CD4-positive, alpha-beta memory T cell (primary cell): ENCODE measurements at regions of chr5 and their contacts with region 1.

Region 1: DNA sequence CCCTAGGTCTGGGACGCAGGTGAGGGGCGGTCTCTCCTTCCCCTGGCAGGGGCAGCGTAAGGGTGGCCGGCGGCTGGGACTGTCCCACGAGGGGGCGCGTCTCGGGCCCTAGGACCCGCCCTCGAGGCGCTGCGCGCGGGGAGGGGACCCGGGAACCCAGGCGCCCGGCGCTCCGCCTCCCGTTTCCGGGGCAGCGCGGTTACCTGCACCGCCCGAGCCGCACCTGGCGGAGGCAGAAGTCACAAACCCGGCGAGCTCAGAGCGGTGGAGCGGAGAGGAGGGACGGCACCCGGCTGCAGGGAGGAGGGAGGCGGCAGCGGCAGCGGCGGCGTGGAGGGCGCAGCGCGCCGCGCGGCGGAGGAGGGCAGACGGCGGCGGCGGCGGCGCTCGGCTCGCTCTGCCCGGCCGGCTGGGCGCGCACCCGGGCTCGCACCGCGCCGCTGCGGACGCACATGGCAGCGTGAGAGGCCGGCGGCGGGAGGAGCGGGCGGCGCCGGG is at the start of gene WWC1:
- DNase-seq: peak; percentile 62 to 83 (median 76)
- H3K4me3 ChIP-seq: no peak within 1 kb of the TSS
- H3K4me3 Mint-ChIP-seq: peak within 1 kb of the TSS; percentile 71 to 86 (median 82)
- H3K27ac ChIP-seq: no peak within 1 kb of the TSS
- H3K27ac Mint-ChIP-seq: peak within 1 kb of the TSS in 2 of 7 donors; percentile 17 to 35
- H3K4me1 ChIP-seq: peaks cover 15% of the 10 kb centered on the region
- H3K4me1 Mint-ChIP-seq: peaks cover 6 to 22% (median 16%) of the 10 kb centered on the region in 4 donors
- H3K27me3 ChIP-seq: peaks cover 14% of the 10 kb centered on the region
- H3K27me3 Mint-ChIP-seq: peaks cover 4 to 10% of the 10 kb centered on the region in 2 donors
- total RNA-seq, gene WWC1: 2.0 to 2.7 TPM

Region 2: DNA sequence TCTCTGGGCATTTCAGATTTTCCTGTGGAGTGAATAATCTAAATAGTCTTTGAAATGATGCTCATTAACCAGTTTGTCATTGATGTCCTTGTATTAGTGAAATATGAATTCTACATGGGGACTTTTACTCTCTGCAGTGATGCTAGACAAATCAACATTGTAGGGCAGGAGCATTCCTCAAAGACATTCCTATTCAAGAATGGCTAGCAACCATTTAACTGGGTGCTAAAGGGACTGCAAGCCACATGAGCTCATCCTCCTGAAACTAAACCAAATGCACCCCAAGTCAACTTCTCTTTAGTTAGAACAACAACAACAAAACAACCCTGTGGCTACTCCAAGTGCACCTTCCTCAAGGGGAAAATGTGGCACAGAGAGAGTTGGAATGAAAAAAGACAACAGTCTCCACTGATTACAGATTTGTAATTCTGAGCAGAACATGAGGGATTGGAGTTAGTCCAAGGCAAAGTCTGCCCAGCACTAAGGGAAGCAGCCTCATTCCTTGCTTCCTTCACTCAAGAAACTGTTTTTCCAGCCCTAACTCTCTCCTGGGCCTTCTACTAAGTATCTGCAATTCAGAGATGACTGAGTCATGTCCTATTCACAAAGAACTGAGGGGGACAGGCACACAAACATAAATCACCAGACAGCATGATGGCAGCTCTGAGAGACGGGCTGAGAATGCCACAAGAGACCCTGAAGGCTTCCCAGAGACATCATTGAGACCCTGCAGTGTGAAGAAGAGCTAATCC is 82.1 kb before region 1 on chr5:
- CTCF ChIA-PET with region 1: no interaction called
- POLR2A ChIA-PET with region 1: no interaction called
- intact Hi-C with region 1: no loop called
- DNase-seq: no peak
- H3K4me3 ChIP-seq: no peak overlapping the region
- H3K4me3 Mint-ChIP-seq: no peak overlapping the region
- H3K27ac ChIP-seq: no peak overlapping the region
- H3K27ac Mint-ChIP-seq: no peak overlapping the region
- H3K4me1 ChIP-seq: no peaks in the 10 kb centered on the region
- H3K4me1 Mint-ChIP-seq: no peaks in the 10 kb centered on the region
- H3K27me3 ChIP-seq: no peaks in the 10 kb centered on the region
- H3K27me3 Mint-ChIP-seq: peaks cover 2 to 4% of the 10 kb centered on the region in 2 donors

Region 3: GRCh38 chr5:168377525-168377924 is 86.0 kb after region 1 on chr5:
- CTCF ChIA-PET with region 1: interaction called, 3 read pairs
- POLR2A ChIA-PET with region 1: interaction called, 3 read pairs
- intact Hi-C with region 1: loop called (anchors 2 kb)
- DNase-seq: peak; percentile 51 to 78 (median 72)
- H3K4me3 ChIP-seq: no peak overlapping the region
- H3K4me3 Mint-ChIP-seq: peak overlapping the region in 7 of 8 donors; percentile 22 to 72 (median 55)
- H3K27ac ChIP-seq: no peak overlapping the region
- H3K27ac Mint-ChIP-seq: peak overlapping the region; percentile 72 to 93 (median 77)
- H3K4me1 ChIP-seq: peaks cover 22% of the 10 kb centered on the region
- H3K4me1 Mint-ChIP-seq: peaks cover 14 to 35% (median 28%) of the 10 kb centered on the region in 4 donors
- H3K27me3 ChIP-seq: no peaks in the 10 kb centered on the region
- H3K27me3 Mint-ChIP-seq: no peaks in the 10 kb centered on the region

Region 4: GRCh38 chr5:168409580-168410458 is 118.3 kb after region 1 on chr5:
- CTCF ChIA-PET with region 1: interaction called, 3 read pairs
- POLR2A ChIA-PET with region 1: interaction called, 9 read pairs
- intact Hi-C with region 1: loop called (anchors 5 kb)
- DNase-seq: peak in 4 of 5 donors; percentile 15 to 29 (median 22)
- H3K4me3 ChIP-seq: peak overlapping the region; percentile 31 to 53
- H3K4me3 Mint-ChIP-seq: peak overlapping the region; percentile 81 to 94 (median 85)
- H3K27ac ChIP-seq: peak overlapping the region; percentile 3
- H3K27ac Mint-ChIP-seq: peak overlapping the region; percentile 68 to 95 (median 93)
- H3K4me1 ChIP-seq: peaks cover 18% of the 10 kb centered on the region
- H3K4me1 Mint-ChIP-seq: peaks cover 15 to 36% (median 22%) of the 10 kb centered on the region in 4 donors
- H3K27me3 ChIP-seq: no peaks in the 10 kb centered on the region
- H3K27me3 Mint-ChIP-seq: no peaks in the 10 kb centered on the region

Region 5: GRCh38 chr5:168486136-168486879 is 194.8 kb after region 1 on chr5 and contains the start of gene RARS1:
- CTCF ChIA-PET with region 1: interaction called, 3 read pairs
- POLR2A ChIA-PET with region 1: no interaction called
- intact Hi-C with region 1: loop called (anchors 1 kb)
- DNase-seq: peak; percentile 78 to 90 (median 81)
- H3K4me3 ChIP-seq: peak within 1 kb of the TSS; percentile 89 to 96
- H3K4me3 Mint-ChIP-seq: peak within 1 kb of the TSS; percentile 98 to 100 (median 99)
- H3K27ac ChIP-seq: peak within 1 kb of the TSS; percentile 71
- H3K27ac Mint-ChIP-seq: peak within 1 kb of the TSS; percentile 91 to 99 (median 97)
- H3K4me1 ChIP-seq: peaks cover 13% of the 10 kb centered on the region
- H3K4me1 Mint-ChIP-seq: peaks cover 23 to 50% (median 36%) of the 10 kb centered on the region in 4 donors
- H3K27me3 ChIP-seq: no peaks in the 10 kb centered on the region
- H3K27me3 Mint-ChIP-seq: peaks cover 0 to 5% of the 10 kb centered on the region in 2 donors
- total RNA-seq, gene RARS1: 82.5 to 82.8 TPM